Gastrocnemius medialis (tissue), 4 donors: ENCODE measurements at regions of chr3 and their contacts with region 1.

Region 1: DNA sequence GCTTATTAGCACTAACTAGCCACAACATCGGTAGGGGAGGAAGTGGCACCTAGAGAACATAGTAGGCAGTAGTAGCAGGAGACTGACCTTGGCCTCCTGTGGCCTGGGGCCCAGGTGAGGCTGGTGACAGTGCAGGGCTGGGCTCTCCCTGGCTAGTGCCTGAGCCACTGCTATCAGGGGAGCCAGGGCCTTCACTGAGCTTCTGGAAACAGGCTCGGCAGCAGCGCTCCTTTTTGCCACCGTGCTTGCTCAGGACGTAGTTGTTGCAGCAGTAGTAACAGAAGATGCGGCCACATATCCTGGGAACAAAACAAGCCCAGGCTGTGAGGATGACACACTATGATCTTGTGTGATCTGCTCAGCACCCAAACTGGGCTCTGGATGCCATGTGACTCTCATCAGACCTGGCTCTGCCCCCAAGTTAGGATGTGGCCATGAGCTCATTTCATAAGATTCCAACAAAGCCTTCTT is 15.1 kb downstream of the CXCR6 start:
- DNase-seq: peak; percentile 86 to 89
- ATAC-seq: peak; percentile 95
- H3K4me3 ChIP-seq: no peak overlapping the region
- H3K27ac ChIP-seq: peak overlapping the region; percentile 83 to 100 (median 96)
- H3K4me1 ChIP-seq: peaks cover 15 to 25% of the 10 kb centered on the region in 2 donors
- H3K27me3 ChIP-seq: no peaks in the 10 kb centered on the region
- CTCF ChIP-seq: no peak
- POLR2A ChIP-seq: peak; percentile 31 to 67

Region 2: GRCh38 chr3:45986303-45986982 is 28.1 kb after region 1 on chr3:
- in situ Hi-C with region 1: no loop called
- intact Hi-C with region 1: loop called (anchors 2 kb)
- DNase-seq: peak; percentile 75 to 80
- ATAC-seq: peak; percentile 45 to 48
- H3K4me3 ChIP-seq: peak overlapping the region in 1 of 4 donors; percentile 21
- H3K27ac ChIP-seq: peak overlapping the region; percentile 97 to 100 (median 100)
- H3K4me1 ChIP-seq: peaks cover 99 to 100% of the 10 kb centered on the region in 2 donors
- H3K27me3 ChIP-seq: no peaks in the 10 kb centered on the region
- CTCF ChIP-seq: no peak
- POLR2A ChIP-seq: peak; percentile 35 to 79